Activated B cell treated with CpG ODN at 0.5 μM for 24 hours (primary cell): ENCODE measurements at regions of chr14 and their contacts with region 1.

Region 1: GRCh38 chr14:75176142-75176820 is at the start of gene TMED10:
- DNase-seq: peak; percentile 79
- ATAC-seq: peak; percentile 73
- H3K4me3 Mint-ChIP-seq: peak within 1 kb of the TSS; percentile 97
- H3K27ac Mint-ChIP-seq: peak within 1 kb of the TSS; percentile 99
- H3K4me1 Mint-ChIP-seq: peaks cover 32% of the 10 kb centered on the region
- H3K27me3 Mint-ChIP-seq: no peaks in the 10 kb centered on the region
- CTCF ChIP-seq: no peak
- total RNA-seq, gene TMED10: 124 and 130 TPM in 2 replicates

Region 2: GRCh38 chr14:75126679-75127473 is 49.4 kb before region 1 on chr14 and contains the start of gene NEK9:
- CTCF ChIA-PET with region 1: no interaction called
- POLR2A ChIA-PET with region 1: interaction called, 6 read pairs
- intact Hi-C with region 1: loop called (anchors 1 kb)
- DNase-seq: peak; percentile 86
- ATAC-seq: peak; percentile 88
- H3K4me3 Mint-ChIP-seq: peak within 1 kb of the TSS; percentile 96
- H3K27ac Mint-ChIP-seq: peak within 1 kb of the TSS; percentile 94
- H3K4me1 Mint-ChIP-seq: peaks cover 38% of the 10 kb centered on the region
- H3K27me3 Mint-ChIP-seq: no peaks in the 10 kb centered on the region
- CTCF ChIP-seq: no peak
- total RNA-seq, gene NEK9: 96.1 and 97.7 TPM in 2 replicates

Region 3: DNA sequence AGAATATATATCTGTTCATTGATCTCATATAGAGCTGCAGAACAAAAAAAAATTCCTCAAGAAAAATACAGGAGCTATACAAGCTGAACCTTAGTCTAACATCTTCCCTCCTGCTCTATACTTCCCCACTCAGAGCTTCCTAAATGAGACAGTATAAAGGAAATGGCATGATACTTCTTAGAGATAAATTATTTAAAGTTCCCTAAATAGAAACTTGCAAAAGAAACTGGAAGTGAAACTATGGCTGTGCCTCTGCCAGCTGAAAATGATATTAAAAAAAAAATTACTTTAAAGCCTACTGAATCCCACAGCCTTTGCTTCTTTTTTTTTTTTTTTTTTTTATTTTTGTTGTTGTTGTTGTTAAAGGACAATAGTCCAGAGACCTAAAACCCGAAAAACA is 37.8 kb before region 1 on chr14:
- CTCF ChIA-PET with region 1: interaction called, 3 read pairs
- POLR2A ChIA-PET with region 1: interaction called, 11 read pairs
- intact Hi-C with region 1: loop called (anchors 1 kb)
- DNase-seq: no peak
- ATAC-seq: peak; percentile 72
- H3K4me3 Mint-ChIP-seq: peak overlapping the region; percentile 55
- H3K27ac Mint-ChIP-seq: peak overlapping the region; percentile 76
- H3K4me1 Mint-ChIP-seq: peaks cover 51% of the 10 kb centered on the region
- H3K27me3 Mint-ChIP-seq: no peaks in the 10 kb centered on the region
- CTCF ChIP-seq: no peak

Region 4: GRCh38 chr14:75188520-75189268 is 12.4 kb after region 1 on chr14:
- CTCF ChIA-PET with region 1: no interaction called
- POLR2A ChIA-PET with region 1: interaction called, 8 read pairs
- intact Hi-C with region 1: loop called (anchors 1 kb)
- DNase-seq: no peak
- ATAC-seq: peak; percentile 88
- H3K4me3 Mint-ChIP-seq: peak overlapping the region; percentile 47
- H3K27ac Mint-ChIP-seq: peak overlapping the region; percentile 68
- H3K4me1 Mint-ChIP-seq: peaks cover 25% of the 10 kb centered on the region
- H3K27me3 Mint-ChIP-seq: no peaks in the 10 kb centered on the region
- CTCF ChIP-seq: no peak

Region 5: GRCh38 chr14:75223664-75224154 is 47.4 kb after region 1 on chr14:
- CTCF ChIA-PET with region 1: no interaction called
- POLR2A ChIA-PET with region 1: no interaction called
- intact Hi-C with region 1: loop called (anchors 2 kb)
- DNase-seq: no peak
- ATAC-seq: peak; percentile 55
- H3K4me3 Mint-ChIP-seq: peak overlapping the region; percentile 50
- H3K27ac Mint-ChIP-seq: peak overlapping the region; percentile 36
- H3K4me1 Mint-ChIP-seq: peaks cover 43% of the 10 kb centered on the region
- H3K27me3 Mint-ChIP-seq: no peaks in the 10 kb centered on the region
- CTCF ChIP-seq: no peak

Region 6: DNA sequence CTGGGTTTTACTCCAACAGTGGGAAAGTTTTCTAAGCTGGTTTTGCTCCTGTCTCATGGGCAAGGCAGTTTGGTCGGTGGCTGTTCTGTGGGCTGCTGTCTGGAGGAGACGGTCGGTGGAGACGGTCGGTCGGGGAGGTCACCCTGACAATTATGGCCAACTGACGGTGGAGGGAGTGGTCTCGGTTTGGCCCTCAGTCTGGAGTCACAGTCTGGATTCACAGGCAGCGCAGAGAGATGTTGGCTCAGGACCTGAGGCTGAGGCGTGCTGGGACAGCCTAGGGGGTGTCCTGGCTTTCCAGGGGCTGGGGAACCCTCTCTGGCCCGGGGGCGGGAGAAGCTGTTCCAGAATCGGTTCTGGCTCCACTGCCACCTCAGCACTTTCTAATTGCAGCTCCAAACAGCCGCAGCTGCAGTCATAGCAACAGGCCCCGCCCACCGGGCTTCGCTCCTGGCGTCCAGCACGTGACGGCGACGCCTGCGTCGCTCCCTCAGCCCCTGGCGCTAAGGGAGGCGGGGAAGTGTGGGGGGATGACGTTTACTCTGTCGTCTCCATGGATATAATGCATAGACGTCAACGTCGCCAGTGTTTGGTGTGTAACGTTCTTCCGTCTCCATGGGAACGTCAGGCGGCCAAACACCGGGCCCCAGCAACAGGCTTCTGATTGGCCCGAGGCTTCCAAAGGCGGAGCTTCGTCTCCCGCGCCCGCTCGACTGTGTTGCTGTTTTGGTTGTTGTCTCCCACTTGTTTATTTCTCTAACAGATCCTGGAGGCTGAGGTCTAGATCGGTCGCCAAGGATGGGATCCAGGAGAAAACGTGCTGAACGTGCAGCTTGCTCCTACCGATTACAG is 82.6 kb after region 1 on chr14:
- CTCF ChIA-PET with region 1: no interaction called
- POLR2A ChIA-PET with region 1: interaction called, 12 read pairs
- intact Hi-C with region 1: loop called (anchors 1 kb)
- DNase-seq: peak; percentile 99
- ATAC-seq: peak; percentile 86
- H3K4me3 Mint-ChIP-seq: peak overlapping the region; percentile 95
- H3K27ac Mint-ChIP-seq: peak overlapping the region; percentile 100
- H3K4me1 Mint-ChIP-seq: peaks cover 24% of the 10 kb centered on the region
- H3K27me3 Mint-ChIP-seq: peaks cover 4% of the 10 kb centered on the region
- CTCF ChIP-seq: no peak

Region 7: DNA sequence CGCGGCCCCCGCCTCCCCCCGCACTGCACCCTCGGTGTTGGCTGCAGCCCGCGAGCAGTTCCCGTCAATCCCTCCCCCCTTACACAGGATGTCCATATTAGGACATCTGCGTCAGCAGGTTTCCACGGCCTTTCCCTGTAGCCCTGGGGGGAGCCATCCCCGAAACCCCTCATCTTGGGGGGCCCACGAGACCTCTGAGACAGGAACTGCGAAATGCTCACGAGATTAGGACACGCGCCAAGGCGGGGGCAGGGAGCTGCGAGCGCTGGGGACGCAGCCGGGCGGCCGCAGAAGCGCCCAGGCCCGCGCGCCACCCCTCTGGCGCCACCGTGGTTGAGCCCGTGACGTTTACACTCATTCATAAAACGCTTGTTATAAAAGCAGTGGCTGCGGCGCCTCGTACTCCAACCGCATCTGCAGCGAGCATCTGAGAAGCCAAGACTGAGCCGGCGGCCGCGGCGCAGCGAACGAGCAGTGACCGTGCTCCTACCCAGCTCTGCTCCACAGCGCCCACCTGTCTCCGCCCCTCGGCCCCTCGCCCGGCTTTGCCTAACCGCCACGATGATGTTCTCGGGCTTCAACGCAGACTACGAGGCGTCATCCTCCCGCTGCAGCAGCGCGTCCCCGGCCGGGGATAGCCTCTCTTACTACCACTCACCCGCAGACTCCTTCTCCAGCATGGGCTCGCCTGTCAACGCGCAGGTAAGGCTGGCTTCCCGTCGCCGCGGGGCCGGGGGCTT is 102.3 kb after region 1 on chr14 and contains the start of gene FOS:
- CTCF ChIA-PET with region 1: no interaction called
- POLR2A ChIA-PET with region 1: interaction called, 3 read pairs
- intact Hi-C with region 1: loop called (anchors 1 kb)
- DNase-seq: peak; percentile 88
- ATAC-seq: peak; percentile 70
- H3K4me3 Mint-ChIP-seq: peak within 1 kb of the TSS; percentile 94
- H3K27ac Mint-ChIP-seq: peak within 1 kb of the TSS; percentile 94
- H3K4me1 Mint-ChIP-seq: peaks cover 64% of the 10 kb centered on the region
- H3K27me3 Mint-ChIP-seq: peaks cover 18% of the 10 kb centered on the region
- CTCF ChIP-seq: no peak
- total RNA-seq, gene FOS: 27.1 and 37.8 TPM in 2 replicates